ENCODE measurements at regions of chr1 and their contacts with region 1.

Region 1: DNA sequence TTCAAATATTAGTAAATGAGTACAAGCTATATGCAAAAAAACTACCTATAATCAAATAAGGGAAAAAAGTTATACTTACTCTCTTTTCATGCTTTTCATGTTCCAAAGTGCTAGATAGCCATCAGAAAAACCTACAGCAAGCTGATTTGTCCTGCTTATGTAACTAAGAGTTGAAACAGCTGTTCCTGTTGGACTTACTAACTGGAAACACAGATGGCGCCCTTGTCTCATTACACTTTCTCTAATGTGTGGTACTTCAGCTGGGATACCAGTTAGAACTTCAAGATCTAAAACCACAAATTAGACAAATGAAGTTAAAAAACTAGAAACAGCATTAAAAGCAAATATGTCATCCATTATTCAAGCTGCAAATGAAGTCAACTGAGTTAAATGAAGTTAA is 24.3 kb downstream of the AHCTF1 start:
- DNase-seq: peak; percentile 33 to 66 (median 61)
- H3K4me3 ChIP-seq: no peak overlapping the region
- H3K4me3 Mint-ChIP-seq: no peak overlapping the region
- H3K27ac ChIP-seq: no peak overlapping the region
- H3K27ac Mint-ChIP-seq: no peak overlapping the region
- H3K4me1 ChIP-seq: no peaks in the 10 kb centered on the region
- H3K4me1 Mint-ChIP-seq: no peaks in the 10 kb centered on the region
- H3K27me3 ChIP-seq: no peaks in the 10 kb centered on the region
- H3K27me3 Mint-ChIP-seq: no peaks in the 10 kb centered on the region
- CTCF ChIP-seq: peak; percentile 79

Region 2: DNA sequence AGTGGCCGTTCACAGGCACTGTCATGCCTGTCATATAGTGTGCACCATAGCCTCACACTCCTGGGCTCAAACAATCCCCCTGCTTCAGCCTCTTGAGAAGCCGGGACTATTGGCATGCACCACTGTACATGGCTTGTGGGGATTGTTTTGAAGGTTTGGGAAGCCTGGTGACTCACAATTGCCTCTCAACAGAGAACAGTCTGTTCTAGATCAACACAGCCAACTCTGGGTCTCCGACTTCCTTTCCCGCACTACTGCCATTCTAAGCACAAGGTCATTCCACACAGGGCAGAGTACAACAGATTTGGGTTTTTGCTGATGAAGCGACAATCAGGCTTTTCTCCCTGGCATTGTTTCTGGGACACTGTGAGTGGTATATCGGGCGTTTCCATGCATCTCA is 39.8 kb after region 1 on chr1:
- intact Hi-C with region 1: no loop called
- DNase-seq: no peak
- H3K4me3 ChIP-seq: no peak overlapping the region
- H3K4me3 Mint-ChIP-seq: no peak overlapping the region
- H3K27ac ChIP-seq: no peak overlapping the region
- H3K27ac Mint-ChIP-seq: no peak overlapping the region
- H3K4me1 ChIP-seq: no peaks in the 10 kb centered on the region
- H3K4me1 Mint-ChIP-seq: no peaks in the 10 kb centered on the region
- H3K27me3 ChIP-seq: no peaks in the 10 kb centered on the region
- H3K27me3 Mint-ChIP-seq: no peaks in the 10 kb centered on the region
- CTCF ChIP-seq: no peak

Region 3: DNA sequence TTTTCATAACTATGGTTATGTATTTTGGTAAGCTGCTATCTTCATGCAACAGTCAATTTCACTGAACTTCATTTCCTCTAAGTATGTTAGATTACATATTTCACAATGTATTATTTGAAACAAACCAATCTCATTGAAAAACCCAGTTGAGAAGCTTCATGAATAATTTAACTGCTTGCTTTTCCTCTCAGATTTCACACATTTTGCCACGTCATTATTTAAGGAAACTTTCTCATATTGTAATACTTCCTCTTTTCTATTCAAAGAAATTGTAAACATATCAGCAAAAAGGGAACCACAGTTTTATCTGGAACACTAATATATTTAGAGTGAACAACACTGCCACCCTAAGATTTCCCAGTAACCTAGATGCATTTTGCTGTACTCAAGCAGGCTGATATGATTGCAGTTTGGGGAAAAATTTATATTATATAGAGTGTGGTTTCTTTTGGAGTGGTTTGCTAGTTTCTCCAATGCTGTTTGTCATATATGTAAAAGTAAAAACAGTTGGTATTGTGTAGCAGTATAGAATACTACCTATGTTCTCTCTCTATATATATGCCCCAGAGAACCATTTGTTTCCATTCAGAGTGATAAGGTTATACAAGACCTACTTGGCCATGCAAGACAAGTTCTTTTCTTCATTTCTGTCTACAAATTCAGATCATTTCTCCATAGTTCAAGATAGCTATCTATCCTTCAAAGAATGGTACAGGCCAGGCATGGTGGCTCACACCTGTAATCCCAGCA is 52.6 kb after region 1 on chr1:
- intact Hi-C with region 1: loop called in 1 of 2 experiments (anchors 5 kb)
- DNase-seq: peak; percentile 81 to 90 (median 87)
- H3K4me3 ChIP-seq: peak overlapping the region; percentile 13 to 59 (median 33)
- H3K4me3 Mint-ChIP-seq: peak overlapping the region; percentile 28 to 76
- H3K27ac ChIP-seq: peak overlapping the region; percentile 81 to 89
- H3K27ac Mint-ChIP-seq: peak overlapping the region; percentile 94 to 99 (median 97)
- H3K4me1 ChIP-seq: peaks cover 42 to 45% of the 10 kb centered on the region in 2 donors
- H3K4me1 Mint-ChIP-seq: peaks cover 49% of the 10 kb centered on the region
- H3K27me3 ChIP-seq: no peaks in the 10 kb centered on the region
- H3K27me3 Mint-ChIP-seq: peaks cover 0 to 2% (median 0%) of the 10 kb centered on the region in 3 donors
- CTCF ChIP-seq: peak; percentile 19

Region 4: GRCh38 chr1:246971090-246971721 is 63.7 kb after region 1 on chr1:
- intact Hi-C with region 1: loop called in 1 of 2 experiments (anchors 2 kb)
- DNase-seq: peak; percentile 36 to 50 (median 49)
- H3K4me3 ChIP-seq: no peak overlapping the region
- H3K4me3 Mint-ChIP-seq: peak overlapping the region; percentile 42 to 74
- H3K27ac ChIP-seq: no peak overlapping the region
- H3K27ac Mint-ChIP-seq: peak overlapping the region in 3 of 7 donors; percentile 6 to 67 (median 8)
- H3K4me1 ChIP-seq: no peaks in the 10 kb centered on the region
- H3K4me1 Mint-ChIP-seq: peaks cover 7% of the 10 kb centered on the region
- H3K27me3 ChIP-seq: no peaks in the 10 kb centered on the region
- H3K27me3 Mint-ChIP-seq: peaks cover 0 to 2% (median 0%) of the 10 kb centered on the region in 3 donors
- CTCF ChIP-seq: peak; percentile 86

Region 5: DNA sequence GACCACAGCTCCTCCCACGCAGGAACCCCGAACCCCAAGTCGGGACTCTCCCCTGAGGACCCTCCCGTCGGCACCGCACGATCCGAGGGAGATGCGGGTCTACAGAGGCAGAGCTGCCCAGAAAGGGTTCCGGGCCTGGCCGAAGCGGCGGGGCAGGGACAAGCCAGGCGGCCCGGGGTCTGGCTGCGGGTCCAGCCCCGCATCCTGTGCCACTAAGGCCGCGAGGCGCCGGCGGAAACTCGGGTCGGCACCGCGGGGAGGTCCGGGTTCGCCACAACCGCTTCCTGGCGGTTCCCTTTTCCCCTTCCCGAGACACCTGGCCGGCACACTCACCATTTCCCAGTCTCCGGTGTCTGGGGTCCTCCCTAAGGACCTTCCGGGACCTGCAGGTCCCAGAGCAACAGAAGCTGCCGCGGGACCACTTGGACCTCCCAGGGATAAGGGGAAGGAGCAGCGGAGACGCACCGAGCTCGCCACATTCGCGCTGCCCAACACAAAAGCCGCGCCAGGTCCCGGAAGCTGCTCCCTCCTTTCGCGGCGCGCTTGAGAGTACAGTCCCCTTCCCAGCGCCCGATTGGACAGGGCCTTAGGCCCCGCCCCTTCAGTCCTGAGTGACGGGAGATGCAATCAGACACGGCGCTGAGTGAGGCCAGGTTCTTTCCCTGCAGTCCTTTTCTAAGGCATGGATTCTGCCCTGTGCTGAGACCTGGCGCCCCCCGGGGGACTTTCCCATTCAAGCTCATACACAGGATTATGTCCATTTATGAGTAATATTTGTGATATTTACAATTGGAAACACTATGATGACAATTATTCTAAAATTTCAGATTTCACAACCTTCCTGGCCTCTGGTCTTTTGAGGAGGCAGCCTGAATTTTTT is 171.0 kb after region 1 on chr1 and contains the start of gene ZNF670:
- intact Hi-C with region 1: loop called in 1 of 2 experiments (anchors 10 kb)
- DNase-seq: peak; percentile 87 to 93 (median 91)
- H3K4me3 ChIP-seq: peak within 1 kb of the TSS; percentile 54 to 84 (median 80)
- H3K4me3 Mint-ChIP-seq: peak within 1 kb of the TSS; percentile 94 to 97
- H3K27ac ChIP-seq: peak within 1 kb of the TSS; percentile 50 to 74
- H3K27ac Mint-ChIP-seq: peak within 1 kb of the TSS; percentile 76 to 88 (median 84)
- H3K4me1 ChIP-seq: peaks cover 16 to 18% of the 10 kb centered on the region in 2 donors
- H3K4me1 Mint-ChIP-seq: peaks cover 28% of the 10 kb centered on the region
- H3K27me3 ChIP-seq: no peaks in the 10 kb centered on the region
- H3K27me3 Mint-ChIP-seq: peaks cover 7 to 10% (median 8%) of the 10 kb centered on the region in 3 donors
- CTCF ChIP-seq: no peak
- polyA plus RNA-seq, gene ZNF670: 0.43 to 1.3 (median 0.44) TPM